Ovary (tissue), 10 donors: ENCODE measurements at regions of chr19 and their contacts with region 1.

Region 1: GRCh38 chr19:10388957-10389356 is 8.6 kb upstream of the TYK2 start:
- DNase-seq: peak; percentile 81 to 93 (median 92)
- H3K4me3 ChIP-seq: no peak overlapping the region
- H3K27ac ChIP-seq: no peak overlapping the region
- H3K4me1 ChIP-seq: no peaks in the 10 kb centered on the region
- H3K27me3 ChIP-seq: no peaks in the 10 kb centered on the region
- CTCF ChIP-seq: peak; percentile 84 to 91 (median 86)
- EP300 ChIP-seq: no peak
- POLR2A ChIP-seq: no peak

Region 2: GRCh38 chr19:10269333-10270179 is 119.4 kb before region 1 on chr19:
- intact Hi-C with region 1: loop called (anchors 1 to 2 kb)
- DNase-seq: peak; percentile 76 to 91 (median 87)
- H3K4me3 ChIP-seq: peak overlapping the region; percentile 39
- H3K27ac ChIP-seq: peak overlapping the region in 1 of 2 donors; percentile 65
- H3K4me1 ChIP-seq: peaks cover 8% of the 10 kb centered on the region
- H3K27me3 ChIP-seq: no peaks in the 10 kb centered on the region
- CTCF ChIP-seq: peak; percentile 84 to 93 (median 92)
- EP300 ChIP-seq: no peak
- POLR2A ChIP-seq: no peak